Right ventricle myocardium inferior (tissue), 1 donor: ENCODE measurements at regions of chr19 and their contacts with region 1.

Region 1: GRCh38 chr19:52823676-52824075 is 2.2 kb upstream of the ZNF28 start:
- DNase-seq: no peak
- ATAC-seq: no peak

Region 2: DNA sequence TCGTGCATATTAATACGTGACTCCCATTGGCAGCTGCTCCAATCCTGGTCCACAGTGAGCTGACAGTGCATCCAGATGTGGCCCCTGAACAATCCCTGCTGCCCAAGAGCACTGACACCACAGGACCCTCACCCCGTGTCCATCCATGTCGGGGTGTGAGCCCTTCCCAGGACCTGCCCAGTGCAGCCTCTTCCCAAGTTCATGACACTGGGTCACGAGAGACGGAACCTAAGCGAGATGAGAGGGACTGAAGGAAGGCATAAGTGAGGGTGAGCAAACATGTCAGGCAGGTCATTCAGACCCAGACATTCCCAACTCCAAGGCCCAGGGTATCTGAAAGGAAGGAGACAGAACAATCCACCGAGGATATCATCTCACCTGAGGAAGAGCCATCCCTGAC is 30.2 kb after region 1 on chr19:
- intact Hi-C with region 1: loop called (anchors 5 kb)
- DNase-seq: no peak
- ATAC-seq: no peak

Region 3: GRCh38 chr19:52871446-52872120 is 47.9 kb after region 1 on chr19:
- intact Hi-C with region 1: no loop called
- DNase-seq: no peak
- ATAC-seq: no peak

Region 4: DNA sequence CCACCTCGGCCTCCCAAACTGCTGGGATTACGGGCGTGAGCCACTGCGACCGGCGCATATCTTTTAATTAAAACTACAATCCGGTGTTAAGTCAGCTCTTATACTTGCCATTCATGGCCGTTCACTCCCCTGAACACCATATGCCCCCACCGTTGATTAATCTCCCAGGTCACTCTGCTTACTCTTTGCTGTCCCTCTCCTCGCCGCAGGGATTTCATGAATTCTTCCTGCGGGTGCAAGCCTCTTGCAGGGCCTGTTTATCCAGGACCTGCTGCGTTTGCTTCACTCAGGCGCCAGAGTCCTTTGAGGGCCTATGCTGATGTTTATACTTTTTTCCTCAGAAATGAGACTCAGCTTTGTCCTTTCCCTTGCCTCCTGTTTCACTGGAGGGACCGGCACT is 221.9 kb after region 1 on chr19:
- intact Hi-C with region 1: no loop called
- DNase-seq: no peak
- ATAC-seq: no peak